ENCODE measurements at regions of chr13 and their contacts with region 1.

Region 1: DNA sequence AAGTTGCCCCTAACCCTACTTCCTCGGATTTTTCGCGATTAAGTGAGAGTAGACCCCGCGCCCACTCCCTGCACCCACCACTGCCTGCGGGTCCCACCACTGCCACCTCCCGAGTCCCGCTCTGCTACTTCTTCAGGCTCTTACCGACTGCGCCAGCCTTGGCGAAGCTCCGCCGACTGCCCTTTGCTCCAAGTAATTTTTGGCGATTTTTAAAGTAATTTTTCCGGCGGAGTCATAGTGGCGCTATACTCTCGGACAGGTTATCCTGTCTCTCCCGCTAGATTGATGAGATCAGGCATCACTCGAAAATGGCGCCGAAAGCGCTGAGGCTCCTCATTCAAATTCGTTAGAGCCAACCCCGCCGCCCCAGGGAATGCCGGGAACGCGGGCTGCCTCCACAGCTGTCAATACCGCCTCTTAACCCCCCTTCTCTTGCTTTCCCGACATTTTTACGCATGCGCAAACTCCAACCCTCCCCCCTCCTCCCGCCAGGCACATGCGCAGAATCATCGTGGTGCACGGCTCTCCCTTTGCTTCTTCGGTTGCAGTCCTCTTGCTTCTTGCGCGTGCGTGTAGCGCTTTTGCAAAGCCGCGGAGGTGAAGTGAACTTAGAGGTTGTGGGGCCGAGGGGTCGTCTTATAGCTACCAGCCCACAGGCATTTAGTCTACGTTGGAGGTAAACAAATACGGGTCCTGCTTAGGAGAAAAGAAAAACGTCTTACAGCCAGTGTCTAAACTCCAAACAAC is 66.6 kb downstream of the KCNRG start:
- DNase-seq: peak; percentile 99
- H3K4me3 ChIP-seq: peak overlapping the region; percentile 76 to 99 (median 92)
- H3K27ac ChIP-seq: peak overlapping the region; percentile 90
- H3K4me1 ChIP-seq: no peaks in the 10 kb centered on the region
- H3K27me3 ChIP-seq: no peaks in the 10 kb centered on the region
- CTCF ChIP-seq: peak in 1 of 2 donors; percentile 11

Region 2: GRCh38 chr13:49936085-49936940 is 145.5 kb before region 1 on chr13 and contains the start of gene SPRYD7:
- CTCF ChIA-PET with region 1: no interaction called
- dilution Hi-C with region 1: no loop called
- in situ Hi-C with region 1: no loop called
- intact Hi-C with region 1: loop called (anchors 5 kb)
- DNase-seq: peak; percentile 98
- H3K4me3 ChIP-seq: peak within 1 kb of the TSS; percentile 94 to 100 (median 99)
- H3K27ac ChIP-seq: peak within 1 kb of the TSS; percentile 82
- H3K4me1 ChIP-seq: peaks cover 5% of the 10 kb centered on the region
- H3K27me3 ChIP-seq: no peaks in the 10 kb centered on the region
- CTCF ChIP-seq: peak; percentile 82 to 92
- total RNA-seq, gene SPRYD7: 12.0 to 17.0 TPM

Region 3: DNA sequence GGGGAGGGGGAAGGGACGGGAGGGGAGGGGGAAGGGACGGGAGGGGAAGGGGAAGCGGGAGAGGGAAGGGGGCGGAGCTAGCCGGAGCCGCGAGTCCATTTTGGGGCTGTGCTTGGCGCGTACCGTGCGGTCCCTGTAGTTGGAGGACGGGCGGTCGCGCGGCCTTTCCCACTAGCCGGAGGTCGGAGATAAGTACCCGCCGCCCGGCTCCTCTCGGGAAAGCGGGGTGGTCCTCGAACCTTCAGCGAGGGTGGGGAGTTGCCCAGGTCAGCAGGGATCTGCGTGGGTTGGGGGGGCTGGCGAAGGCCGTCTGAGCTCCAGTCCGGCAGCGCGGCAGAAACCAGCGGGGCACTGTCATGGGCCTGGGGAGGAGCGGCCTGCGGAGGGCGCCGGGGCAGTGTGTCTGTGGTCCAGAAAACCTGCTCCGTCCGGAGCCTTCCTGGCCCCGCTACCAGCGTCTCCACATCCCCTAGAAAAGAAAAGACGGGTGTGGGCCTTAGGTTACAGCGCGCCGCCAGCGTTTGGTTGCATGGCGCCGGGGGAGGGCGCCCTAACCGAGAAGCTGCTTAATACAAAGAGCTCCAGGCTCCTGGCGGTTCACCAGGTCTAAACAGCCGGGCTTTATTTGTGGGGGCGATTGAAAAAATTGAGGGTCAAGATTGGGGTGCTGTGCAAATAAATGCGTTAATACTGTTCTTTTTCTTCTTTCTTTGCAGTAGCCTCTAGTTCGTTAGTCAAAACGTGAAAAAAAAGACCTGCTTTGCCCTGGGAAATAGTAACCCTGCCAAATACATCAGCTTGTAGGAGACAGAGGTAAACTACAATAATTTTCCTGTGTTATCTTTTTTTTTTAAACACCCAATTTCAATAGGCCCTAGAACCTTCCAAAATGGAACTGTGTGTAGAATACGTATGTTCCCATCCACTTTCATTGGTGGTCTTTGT is 84.6 kb before region 1 on chr13 and contains the start of gene TRIM13:
- CTCF ChIA-PET with region 1: interaction called, 4 read pairs
- dilution Hi-C with region 1: no loop called
- in situ Hi-C with region 1: no loop called
- intact Hi-C with region 1: loop called (anchors 1 kb)
- DNase-seq: peak; percentile 79
- H3K4me3 ChIP-seq: peak within 1 kb of the TSS; percentile 69 to 85 (median 79)
- H3K27ac ChIP-seq: peak within 1 kb of the TSS; percentile 79
- H3K4me1 ChIP-seq: peaks cover 13% of the 10 kb centered on the region
- H3K27me3 ChIP-seq: no peaks in the 10 kb centered on the region
- CTCF ChIP-seq: peak; percentile 58 to 86
- total RNA-seq, gene TRIM13: 17.9 to 21.0 TPM

Region 4: GRCh38 chr13:50065712-50066111 is 16.1 kb before region 1 on chr13:
- CTCF ChIA-PET with region 1: no interaction called
- dilution Hi-C with region 1: no loop called
- in situ Hi-C with region 1: no loop called
- intact Hi-C with region 1: no loop called
- DNase-seq: no peak
- H3K4me3 ChIP-seq: no peak overlapping the region
- H3K27ac ChIP-seq: no peak overlapping the region
- H3K4me1 ChIP-seq: no peaks in the 10 kb centered on the region
- H3K27me3 ChIP-seq: no peaks in the 10 kb centered on the region
- CTCF ChIP-seq: no peak

Region 5: DNA sequence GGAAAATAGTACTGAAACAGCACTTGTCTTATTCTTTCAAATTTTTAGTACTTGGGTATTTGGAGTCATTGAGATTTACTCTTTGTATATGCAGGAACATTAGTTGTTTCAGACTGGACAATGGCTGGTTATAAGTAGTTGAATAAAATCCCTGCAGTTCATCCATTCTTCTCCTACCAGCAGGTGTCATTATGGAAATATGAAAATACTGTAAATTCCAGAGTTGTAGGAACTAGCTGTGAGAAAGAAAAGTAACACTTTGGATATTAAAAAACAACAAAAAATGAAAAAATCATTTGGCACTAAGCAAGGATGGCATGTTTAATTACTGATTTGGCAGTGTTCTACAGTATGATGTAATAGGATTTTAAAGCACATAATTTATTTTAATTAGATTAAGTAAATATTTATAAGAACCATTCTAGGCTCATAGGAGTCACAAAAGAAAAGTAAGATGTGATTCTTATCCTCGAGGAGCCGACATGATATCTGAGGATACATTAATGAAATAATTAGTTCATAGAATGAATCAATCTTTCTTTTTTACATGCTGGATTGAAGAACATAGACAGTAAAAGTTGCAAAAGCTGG is 88.7 kb after region 1 on chr13:
- CTCF ChIA-PET with region 1: no interaction called
- dilution Hi-C with region 1: no loop called
- in situ Hi-C with region 1: no loop called
- intact Hi-C with region 1: loop called (anchors 10 kb)
- DNase-seq: peak; percentile 26
- H3K4me3 ChIP-seq: no peak overlapping the region
- H3K27ac ChIP-seq: no peak overlapping the region
- H3K4me1 ChIP-seq: no peaks in the 10 kb centered on the region
- H3K27me3 ChIP-seq: no peaks in the 10 kb centered on the region
- CTCF ChIP-seq: peak in 1 of 2 donors; percentile 47

Region 6: GRCh38 chr13:50370303-50370950 is 288.6 kb after region 1 on chr13:
- CTCF ChIA-PET with region 1: no interaction called
- dilution Hi-C with region 1: no loop called
- in situ Hi-C with region 1: no loop called
- intact Hi-C with region 1: loop called (anchors 10 kb)
- DNase-seq: no peak
- H3K4me3 ChIP-seq: no peak overlapping the region
- H3K27ac ChIP-seq: no peak overlapping the region
- H3K4me1 ChIP-seq: no peaks in the 10 kb centered on the region
- H3K27me3 ChIP-seq: no peaks in the 10 kb centered on the region
- CTCF ChIP-seq: no peak

Region 7: GRCh38 chr13:50911937-50912795 is 830.3 kb after region 1 on chr13:
- CTCF ChIA-PET with region 1: no interaction called
- dilution Hi-C with region 1: no loop called
- in situ Hi-C with region 1: no loop called
- intact Hi-C with region 1: loop called (anchors 1 kb)
- DNase-seq: peak; percentile 65
- H3K4me3 ChIP-seq: no peak overlapping the region
- H3K27ac ChIP-seq: no peak overlapping the region
- H3K4me1 ChIP-seq: peaks cover 22% of the 10 kb centered on the region
- H3K27me3 ChIP-seq: no peaks in the 10 kb centered on the region
- CTCF ChIP-seq: peak; percentile 86 to 93